Naive thymus-derived CD4-positive, alpha-beta T cell (primary cell): ENCODE measurements at regions of chr15 and their contacts with region 1.

Region 1: GRCh38 chr15:67839929-67840748 is at the start of gene RNU6-1:
- DNase-seq: peak; percentile 91 to 99 (median 97)
- ATAC-seq: peak; percentile 93
- H3K4me3 ChIP-seq: peak within 1 kb of the TSS; percentile 82
- H3K4me3 Mint-ChIP-seq: peak within 1 kb of the TSS; percentile 82 to 97 (median 94)
- H3K27ac ChIP-seq: peak within 1 kb of the TSS; percentile 96
- H3K27ac Mint-ChIP-seq: peak within 1 kb of the TSS; percentile 95 to 100 (median 99)
- H3K4me1 ChIP-seq: peaks cover 18 to 21% of the 10 kb centered on the region in 2 donors
- H3K4me1 Mint-ChIP-seq: peaks cover 17 to 51% (median 25%) of the 10 kb centered on the region in 7 donors
- H3K27me3 ChIP-seq: peaks cover 0 to 7% of the 10 kb centered on the region in 2 donors
- H3K27me3 Mint-ChIP-seq: peaks cover 2 to 40% (median 7%) of the 10 kb centered on the region in 5 donors
- total RNA-seq, gene RNU6-1: not detected

Region 2: GRCh38 chr15:67049351-67050044 is 790.6 kb before region 1 on chr15:
- CTCF ChIA-PET with region 1: no interaction called
- POLR2A ChIA-PET with region 1: no interaction called
- intact Hi-C with region 1: loop called in 1 of 2 experiments (anchors 10 kb)
- DNase-seq: no peak
- ATAC-seq: no peak
- H3K4me3 ChIP-seq: no peak overlapping the region
- H3K4me3 Mint-ChIP-seq: no peak overlapping the region
- H3K27ac ChIP-seq: no peak overlapping the region
- H3K27ac Mint-ChIP-seq: peak overlapping the region in 1 of 9 donors; percentile 41
- H3K4me1 ChIP-seq: no peaks in the 10 kb centered on the region
- H3K4me1 Mint-ChIP-seq: peaks cover 11 to 29% (median 11%) of the 10 kb centered on the region in 7 donors
- H3K27me3 ChIP-seq: no peaks in the 10 kb centered on the region
- H3K27me3 Mint-ChIP-seq: no peaks in the 10 kb centered on the region

Region 3: DNA sequence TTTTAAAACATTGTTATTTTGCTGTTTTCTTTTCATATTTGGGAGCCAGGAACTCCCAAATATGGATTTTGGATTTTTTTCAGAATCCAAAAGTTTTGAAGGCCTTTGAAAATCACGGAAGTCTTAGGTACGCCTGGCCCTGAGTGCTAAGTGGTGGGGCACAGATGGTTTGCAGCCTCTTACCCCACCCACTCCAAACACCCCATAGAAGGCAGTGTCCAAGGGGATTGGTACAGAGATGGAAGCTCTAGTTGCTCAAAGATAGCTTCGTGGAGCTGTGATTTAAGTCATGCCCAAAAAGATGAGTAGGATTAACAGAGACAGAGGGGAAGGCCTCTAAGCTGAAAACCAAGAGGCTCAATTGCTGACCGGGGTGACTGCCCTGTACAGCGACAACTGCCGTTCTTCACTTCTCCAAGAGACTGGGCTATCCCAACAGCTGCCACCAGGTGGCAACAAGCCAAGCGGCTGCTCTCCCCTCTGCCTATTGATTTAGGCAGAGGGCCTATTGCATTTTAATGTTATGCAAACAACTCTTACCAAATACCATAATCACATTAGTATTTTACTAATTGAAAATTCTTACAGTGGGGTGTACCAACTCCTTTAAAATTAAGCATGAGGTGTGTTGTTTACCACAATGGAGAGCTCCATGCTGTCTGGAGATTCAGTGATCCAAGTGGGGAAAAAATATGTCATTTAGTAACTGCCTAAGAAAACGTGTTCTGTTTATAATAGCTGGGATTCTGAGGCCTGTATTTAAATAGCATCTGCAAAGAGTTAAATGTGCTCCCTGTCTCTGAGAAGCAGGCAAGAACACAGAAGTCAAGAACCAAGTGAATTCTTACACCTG is 383.2 kb before region 1 on chr15:
- CTCF ChIA-PET with region 1: interaction called, 56 read pairs
- POLR2A ChIA-PET with region 1: interaction called, 12 read pairs
- intact Hi-C with region 1: loop called (anchors 1 kb)
- DNase-seq: peak; percentile 49 to 83 (median 70)
- ATAC-seq: peak; percentile 94
- H3K4me3 ChIP-seq: no peak overlapping the region
- H3K4me3 Mint-ChIP-seq: no peak overlapping the region
- H3K27ac ChIP-seq: no peak overlapping the region
- H3K27ac Mint-ChIP-seq: no peak overlapping the region
- H3K4me1 ChIP-seq: no peaks in the 10 kb centered on the region
- H3K4me1 Mint-ChIP-seq: peaks cover 0 to 3% (median 0%) of the 10 kb centered on the region in 7 donors
- H3K27me3 ChIP-seq: no peaks in the 10 kb centered on the region
- H3K27me3 Mint-ChIP-seq: peaks cover 0 to 26% (median 4%) of the 10 kb centered on the region in 5 donors

Region 4: DNA sequence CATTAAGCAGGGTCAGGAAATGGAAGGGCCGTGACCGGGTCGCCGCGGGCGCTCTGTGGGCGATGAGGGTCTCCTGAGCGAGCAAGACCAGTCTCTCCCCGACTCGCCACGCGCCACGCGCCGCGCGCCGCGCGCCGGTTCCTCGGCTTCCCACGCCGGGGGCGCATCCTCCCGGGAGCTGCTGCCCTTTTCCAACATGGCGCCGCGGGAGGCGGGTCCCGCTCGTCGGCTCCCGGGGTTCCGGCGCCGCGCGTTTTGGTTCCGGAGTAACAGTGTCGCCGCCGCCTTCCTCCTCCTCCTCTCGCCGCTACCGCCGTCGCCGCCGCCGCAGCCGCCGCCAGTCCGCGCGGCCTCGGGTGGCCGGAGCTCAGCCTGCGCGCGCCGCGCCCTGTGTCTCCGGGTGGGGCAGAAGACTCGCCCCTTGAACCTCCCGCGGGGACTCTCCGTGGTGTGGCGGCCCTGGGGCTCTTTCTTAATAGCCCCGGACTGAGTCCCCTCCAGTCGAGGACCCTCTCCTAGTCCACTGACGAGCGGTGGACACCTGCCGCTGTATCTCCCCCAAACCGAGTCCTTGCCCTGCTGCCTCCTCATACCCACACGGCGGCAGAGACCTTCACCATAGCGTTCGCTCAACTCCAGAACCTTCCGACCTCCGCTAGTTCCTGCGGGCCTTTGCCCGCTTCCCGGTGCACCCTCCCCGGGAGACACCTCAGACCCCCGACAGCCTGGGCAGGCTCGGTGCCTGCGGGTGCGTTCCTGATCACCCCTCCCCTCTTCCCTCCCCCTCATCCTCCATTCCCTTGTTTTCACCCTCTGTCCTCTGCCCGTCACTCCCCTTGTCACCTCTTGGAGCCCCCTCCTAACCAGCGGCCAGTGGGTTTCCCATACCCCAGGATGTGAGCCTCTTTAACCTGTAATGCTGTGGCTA is 297.5 kb before region 1 on chr15 and contains the start of gene MAP2K5:
- CTCF ChIA-PET with region 1: no interaction called
- POLR2A ChIA-PET with region 1: interaction called, 11 read pairs
- intact Hi-C with region 1: loop called (anchors 1 kb)
- DNase-seq: peak; percentile 75 to 87 (median 78)
- ATAC-seq: peak; percentile 89
- H3K4me3 ChIP-seq: peak within 1 kb of the TSS; percentile 90
- H3K4me3 Mint-ChIP-seq: peak within 1 kb of the TSS; percentile 92 to 98 (median 98)
- H3K27ac ChIP-seq: peak within 1 kb of the TSS; percentile 78
- H3K27ac Mint-ChIP-seq: peak within 1 kb of the TSS; percentile 97 to 100 (median 99)
- H3K4me1 ChIP-seq: peaks cover 7 to 22% of the 10 kb centered on the region in 2 donors
- H3K4me1 Mint-ChIP-seq: peaks cover 20 to 68% (median 56%) of the 10 kb centered on the region in 7 donors
- H3K27me3 ChIP-seq: no peaks in the 10 kb centered on the region
- H3K27me3 Mint-ChIP-seq: no peaks in the 10 kb centered on the region
- total RNA-seq, gene MAP2K5: 23.4 to 43.4 (median 35.7) TPM

Region 5: DNA sequence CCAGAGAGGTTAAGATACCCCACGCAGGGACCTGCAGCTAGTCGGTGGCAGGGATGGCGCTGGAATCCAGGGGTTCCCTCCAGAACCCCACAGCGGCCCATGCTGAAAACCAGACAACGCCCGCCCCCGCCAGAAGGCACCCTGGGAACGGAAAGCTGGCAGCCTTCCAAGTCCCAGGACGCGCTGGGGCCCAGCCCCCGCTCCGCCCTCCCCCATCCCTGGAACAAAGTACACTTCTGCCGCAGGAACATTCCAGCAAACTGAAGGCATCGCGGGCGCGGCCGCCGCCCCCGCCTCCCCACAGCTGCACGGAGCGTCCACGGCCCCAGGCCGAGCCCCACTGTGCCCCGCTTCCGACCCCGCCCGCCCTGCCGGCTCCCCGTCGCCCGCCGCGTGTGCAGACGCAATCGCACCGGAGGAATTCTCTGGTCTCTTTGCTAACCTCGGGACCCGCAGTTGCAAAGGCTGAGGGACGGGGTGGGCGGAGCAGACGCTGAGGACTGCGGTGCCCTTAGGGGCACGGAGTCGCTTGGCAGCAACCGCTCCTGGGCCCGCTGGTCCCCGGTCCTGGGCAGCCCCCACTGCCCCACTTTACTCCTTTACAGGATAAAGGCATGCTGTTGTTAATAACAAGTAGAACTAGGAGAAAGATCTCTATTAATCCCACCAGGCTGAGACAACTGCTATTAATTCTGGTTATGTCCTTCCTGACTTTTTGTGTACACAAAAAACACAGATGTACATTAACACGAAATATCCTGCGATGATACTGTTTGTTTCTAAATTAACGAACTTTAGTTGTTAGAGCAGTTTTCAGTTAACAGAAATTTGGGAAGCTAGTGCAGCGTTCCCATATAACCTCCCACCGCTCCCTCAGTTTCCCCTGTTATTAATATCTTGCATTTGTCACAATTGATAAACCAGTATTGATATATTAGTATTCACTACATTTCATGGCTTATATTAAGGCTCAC is 44.7 kb after region 1 on chr15:
- CTCF ChIA-PET with region 1: no interaction called
- POLR2A ChIA-PET with region 1: no interaction called
- intact Hi-C with region 1: loop called in 1 of 2 experiments (anchors 1 kb)
- DNase-seq: peak; percentile 6 to 50 (median 35)
- ATAC-seq: peak; percentile 68
- H3K4me3 ChIP-seq: peak overlapping the region; percentile 28
- H3K4me3 Mint-ChIP-seq: peak overlapping the region; percentile 53 to 84 (median 74)
- H3K27ac ChIP-seq: no peak overlapping the region
- H3K27ac Mint-ChIP-seq: peak overlapping the region in 2 of 9 donors; percentile 4 to 32
- H3K4me1 ChIP-seq: no peaks in the 10 kb centered on the region
- H3K4me1 Mint-ChIP-seq: peaks cover 8 to 29% (median 20%) of the 10 kb centered on the region in 7 donors
- H3K27me3 ChIP-seq: no peaks in the 10 kb centered on the region
- H3K27me3 Mint-ChIP-seq: peaks cover 5 to 25% (median 21%) of the 10 kb centered on the region in 5 donors

Region 6: DNA sequence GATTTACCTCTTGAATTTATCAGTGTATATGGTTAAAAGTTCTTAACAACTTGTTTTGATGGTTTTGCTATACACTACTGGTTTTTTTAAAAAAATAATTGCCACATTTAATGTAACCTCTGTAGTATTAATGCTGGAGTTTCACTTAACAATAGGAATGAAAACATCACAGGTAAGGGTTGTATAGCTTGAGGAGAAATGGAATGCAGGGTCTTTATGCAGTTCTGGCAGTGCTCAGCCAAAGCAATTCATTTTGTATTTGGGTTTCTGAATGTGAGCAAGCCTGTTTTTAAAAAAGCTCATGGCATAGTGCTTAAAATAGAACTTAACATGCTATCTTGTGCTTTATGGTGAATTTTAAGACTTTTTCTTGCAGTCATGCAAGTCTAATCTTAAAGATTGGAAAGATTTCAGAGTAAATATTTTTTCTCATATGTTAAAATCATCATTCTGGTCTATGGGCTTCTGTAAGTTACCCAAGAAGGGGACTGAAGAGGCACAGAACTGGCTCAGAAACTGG is 222.9 kb after region 1 on chr15:
- CTCF ChIA-PET with region 1: no interaction called
- POLR2A ChIA-PET with region 1: no interaction called
- intact Hi-C with region 1: no loop called
- DNase-seq: no peak
- ATAC-seq: no peak
- H3K4me3 ChIP-seq: no peak overlapping the region
- H3K4me3 Mint-ChIP-seq: peak overlapping the region in 8 of 10 donors; percentile 10 to 72 (median 48)
- H3K27ac ChIP-seq: no peak overlapping the region
- H3K27ac Mint-ChIP-seq: peak overlapping the region in 1 of 9 donors; percentile 21
- H3K4me1 ChIP-seq: peaks cover 23 to 26% of the 10 kb centered on the region in 2 donors
- H3K4me1 Mint-ChIP-seq: peaks cover 29 to 83% (median 70%) of the 10 kb centered on the region in 7 donors
- H3K27me3 ChIP-seq: no peaks in the 10 kb centered on the region
- H3K27me3 Mint-ChIP-seq: no peaks in the 10 kb centered on the region

Region 7: DNA sequence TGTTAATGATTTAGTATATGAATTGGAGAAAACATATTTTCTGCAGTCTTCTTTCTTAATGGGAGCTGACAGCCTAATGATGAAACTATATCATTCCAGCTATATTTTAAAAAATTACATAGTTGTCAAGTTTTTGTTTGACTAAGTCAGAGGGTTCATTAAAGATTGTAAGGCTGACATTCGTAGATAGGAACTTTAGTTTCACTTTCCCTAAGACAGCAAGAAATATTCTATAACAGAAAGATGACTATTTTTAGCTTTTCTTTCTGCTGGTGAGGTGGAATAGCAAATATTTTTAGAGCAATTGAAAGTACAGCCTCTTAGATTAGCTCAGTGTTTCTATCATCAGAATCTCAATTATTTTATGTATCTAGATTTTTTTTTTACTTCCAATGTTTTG is 274.2 kb after region 1 on chr15:
- CTCF ChIA-PET with region 1: no interaction called
- POLR2A ChIA-PET with region 1: no interaction called
- intact Hi-C with region 1: no loop called
- DNase-seq: peak in 3 of 9 donors; percentile 7 to 20 (median 19)
- ATAC-seq: peak; percentile 47
- H3K4me3 ChIP-seq: peak overlapping the region; percentile 23
- H3K4me3 Mint-ChIP-seq: peak overlapping the region; percentile 27 to 81 (median 72)
- H3K27ac ChIP-seq: peak overlapping the region; percentile 39
- H3K27ac Mint-ChIP-seq: peak overlapping the region in 7 of 9 donors; percentile 0 to 79 (median 14)
- H3K4me1 ChIP-seq: peaks cover 12 to 14% of the 10 kb centered on the region in 2 donors
- H3K4me1 Mint-ChIP-seq: peaks cover 37 to 95% (median 83%) of the 10 kb centered on the region in 7 donors
- H3K27me3 ChIP-seq: no peaks in the 10 kb centered on the region
- H3K27me3 Mint-ChIP-seq: no peaks in the 10 kb centered on the region

Region 8: DNA sequence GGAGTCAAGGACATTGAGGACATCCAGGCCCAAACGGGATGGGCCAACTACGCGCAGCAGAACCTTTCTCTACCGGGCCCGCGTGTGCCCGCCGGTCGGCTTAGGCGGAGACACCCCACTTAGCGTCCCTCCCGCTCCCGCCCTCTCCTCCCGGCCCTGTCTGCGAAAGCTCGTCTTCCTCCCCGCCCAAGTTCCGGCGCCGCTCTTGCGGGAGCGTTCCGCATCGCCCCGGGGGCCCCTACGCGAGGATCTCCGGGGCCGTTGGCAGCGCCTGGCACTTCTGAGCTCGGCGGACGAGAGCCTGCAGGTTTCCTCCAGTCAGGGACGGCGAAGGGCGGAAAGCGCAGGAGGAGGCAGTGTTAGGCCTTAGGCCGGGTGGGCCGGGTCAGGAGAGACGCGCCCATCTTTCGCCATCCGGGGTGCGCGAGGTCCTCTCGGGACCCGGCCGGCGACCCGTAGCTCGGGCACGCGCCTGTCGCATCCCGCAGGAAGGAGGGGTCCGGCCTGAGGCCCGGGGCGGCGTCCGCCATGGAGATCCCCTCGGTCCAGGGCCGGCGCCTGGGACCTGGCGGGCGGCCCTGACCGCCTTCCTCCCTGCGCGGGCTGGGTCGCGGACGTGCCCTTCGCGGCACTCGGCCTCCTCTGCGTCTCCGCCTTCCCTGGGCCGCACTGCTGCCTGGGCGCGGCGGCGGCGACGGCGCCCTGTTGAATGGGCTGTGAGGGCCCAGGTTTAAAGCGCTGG is 437.6 kb after region 1 on chr15 and contains the start of gene FEM1B:
- CTCF ChIA-PET with region 1: no interaction called
- POLR2A ChIA-PET with region 1: interaction called, 18 read pairs
- intact Hi-C with region 1: loop called (anchors 1 kb)
- DNase-seq: peak; percentile 82 to 92 (median 88)
- ATAC-seq: peak; percentile 89
- H3K4me3 ChIP-seq: peak within 1 kb of the TSS; percentile 92
- H3K4me3 Mint-ChIP-seq: peak within 1 kb of the TSS; percentile 86 to 100 (median 96)
- H3K27ac ChIP-seq: peak within 1 kb of the TSS; percentile 90
- H3K27ac Mint-ChIP-seq: peak within 1 kb of the TSS; percentile 89 to 99 (median 98)
- H3K4me1 ChIP-seq: peaks cover 33 to 38% of the 10 kb centered on the region in 2 donors
- H3K4me1 Mint-ChIP-seq: peaks cover 40 to 63% (median 56%) of the 10 kb centered on the region in 7 donors
- H3K27me3 ChIP-seq: no peaks in the 10 kb centered on the region
- H3K27me3 Mint-ChIP-seq: no peaks in the 10 kb centered on the region
- total RNA-seq, gene FEM1B: 56.5 to 73.2 (median 62.0) TPM

Region 9: GRCh38 chr15:68479406-68479805 is 639.3 kb after region 1 on chr15:
- CTCF ChIA-PET with region 1: no interaction called
- POLR2A ChIA-PET with region 1: no interaction called
- intact Hi-C with region 1: no loop called
- DNase-seq: no peak
- ATAC-seq: no peak
- H3K4me3 ChIP-seq: no peak overlapping the region
- H3K4me3 Mint-ChIP-seq: no peak overlapping the region
- H3K27ac ChIP-seq: no peak overlapping the region
- H3K27ac Mint-ChIP-seq: no peak overlapping the region
- H3K4me1 ChIP-seq: no peaks in the 10 kb centered on the region
- H3K4me1 Mint-ChIP-seq: peaks cover 0 to 3% (median 0%) of the 10 kb centered on the region in 7 donors
- H3K27me3 ChIP-seq: peaks cover 0 to 3% of the 10 kb centered on the region in 2 donors
- H3K27me3 Mint-ChIP-seq: peaks cover 12 to 37% (median 15%) of the 10 kb centered on the region in 5 donors

Region 10: GRCh38 chr15:68679961-68680371 is 839.8 kb after region 1 on chr15:
- CTCF ChIA-PET with region 1: no interaction called
- POLR2A ChIA-PET with region 1: no interaction called
- intact Hi-C with region 1: no loop called
- DNase-seq: no peak
- ATAC-seq: no peak
- H3K4me3 ChIP-seq: no peak overlapping the region
- H3K4me3 Mint-ChIP-seq: no peak overlapping the region
- H3K27ac ChIP-seq: no peak overlapping the region
- H3K27ac Mint-ChIP-seq: no peak overlapping the region
- H3K4me1 ChIP-seq: no peaks in the 10 kb centered on the region
- H3K4me1 Mint-ChIP-seq: no peaks in the 10 kb centered on the region
- H3K27me3 ChIP-seq: no peaks in the 10 kb centered on the region
- H3K27me3 Mint-ChIP-seq: peaks cover 0 to 10% (median 0%) of the 10 kb centered on the region in 5 donors